Gastrocnemius medialis (tissue), 4 donors: ENCODE measurements at regions of chr5 and their contacts with region 1.

Region 1: DNA sequence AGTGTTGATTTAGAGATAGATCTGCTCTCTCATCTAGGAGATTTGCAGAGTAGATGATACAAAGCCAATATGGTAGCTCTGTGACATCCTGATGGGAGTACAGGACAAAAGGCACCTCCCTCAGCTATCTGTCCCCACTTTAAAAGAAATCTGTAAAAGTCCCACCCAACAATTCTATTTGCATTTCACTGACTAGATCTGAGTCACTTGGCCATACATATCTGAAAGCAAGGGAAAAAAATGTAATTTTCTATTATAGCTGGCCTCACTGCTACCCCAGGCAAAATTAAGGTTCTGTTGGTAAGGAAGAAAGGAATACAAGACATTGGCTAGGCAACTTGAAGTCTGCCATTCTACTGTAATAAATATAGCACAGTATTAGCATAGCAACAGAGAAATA is 96.2 kb upstream of the RNF180 start:
- DNase-seq: no peak
- ATAC-seq: no peak
- H3K4me3 ChIP-seq: no peak overlapping the region
- H3K27ac ChIP-seq: no peak overlapping the region
- H3K4me1 ChIP-seq: no peaks in the 10 kb centered on the region
- H3K27me3 ChIP-seq: no peaks in the 10 kb centered on the region
- CTCF ChIP-seq: no peak
- POLR2A ChIP-seq: no peak

Region 2: DNA sequence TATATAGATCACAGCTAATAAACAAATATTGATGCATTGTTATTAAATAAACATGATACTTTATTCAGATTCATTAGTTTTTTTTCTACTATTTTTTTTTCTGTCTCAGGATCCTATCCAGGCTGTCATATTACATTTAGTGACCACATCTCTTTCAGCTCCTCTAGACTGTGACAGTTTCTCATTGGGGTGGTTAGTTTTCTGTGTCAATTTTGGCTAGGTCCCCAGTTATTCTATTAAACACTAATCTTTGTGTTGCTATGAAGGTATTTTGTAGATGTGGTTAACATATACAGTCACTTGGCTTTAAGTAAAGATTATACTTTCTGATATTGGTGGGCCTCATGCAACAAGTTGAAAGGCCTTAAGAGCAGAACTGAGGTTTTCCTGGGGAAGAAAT is 927.9 kb before region 1 on chr5:
- in situ Hi-C with region 1: no loop called
- intact Hi-C with region 1: loop called (anchors 5 kb)
- DNase-seq: no peak
- ATAC-seq: no peak
- H3K4me3 ChIP-seq: no peak overlapping the region
- H3K27ac ChIP-seq: no peak overlapping the region
- H3K4me1 ChIP-seq: no peaks in the 10 kb centered on the region
- H3K27me3 ChIP-seq: no peaks in the 10 kb centered on the region
- CTCF ChIP-seq: no peak
- POLR2A ChIP-seq: no peak

Region 3: GRCh38 chr5:63555874-63556273 is 513.6 kb before region 1 on chr5:
- in situ Hi-C with region 1: no loop called
- intact Hi-C with region 1: no loop called
- DNase-seq: no peak
- ATAC-seq: no peak
- H3K4me3 ChIP-seq: no peak overlapping the region
- H3K27ac ChIP-seq: no peak overlapping the region
- H3K4me1 ChIP-seq: no peaks in the 10 kb centered on the region
- H3K27me3 ChIP-seq: no peaks in the 10 kb centered on the region
- CTCF ChIP-seq: no peak
- POLR2A ChIP-seq: no peak

Region 4: DNA sequence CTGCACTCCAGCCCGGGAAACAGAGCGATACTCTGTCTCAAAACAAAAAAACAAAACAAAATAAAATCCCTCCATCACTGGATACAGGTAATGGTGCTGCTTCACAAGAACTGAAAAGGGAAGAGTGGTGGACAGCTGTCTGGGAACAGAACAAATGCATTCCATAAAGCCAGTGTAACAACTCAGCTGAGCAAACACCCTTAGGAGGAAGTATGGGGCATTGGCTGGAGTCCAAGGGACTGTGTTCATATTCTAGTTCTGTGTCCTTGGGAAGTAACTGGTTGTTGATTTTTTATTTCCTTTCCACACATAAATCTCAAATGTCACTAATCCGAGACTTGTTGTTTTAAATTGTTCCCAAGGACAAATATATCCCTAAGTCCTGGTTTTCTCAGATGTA is 145.6 kb before region 1 on chr5:
- in situ Hi-C with region 1: no loop called
- intact Hi-C with region 1: no loop called
- DNase-seq: no peak
- ATAC-seq: no peak
- H3K4me3 ChIP-seq: no peak overlapping the region
- H3K27ac ChIP-seq: no peak overlapping the region
- H3K4me1 ChIP-seq: no peaks in the 10 kb centered on the region
- H3K27me3 ChIP-seq: no peaks in the 10 kb centered on the region
- CTCF ChIP-seq: no peak
- POLR2A ChIP-seq: no peak